Activated B cell treated with CpG ODN at 0.5 μM for 24 hours (primary cell): ENCODE measurements at regions of chr13 and their contacts with region 1.

Region 1: GRCh38 chr13:67238277-67238859 is 8.2 kb upstream of the PCDH9 start:
- DNase-seq: no peak
- ATAC-seq: peak; percentile 68
- H3K4me3 Mint-ChIP-seq: no peak overlapping the region
- H3K27ac Mint-ChIP-seq: no peak overlapping the region
- H3K4me1 Mint-ChIP-seq: no peaks in the 10 kb centered on the region
- H3K27me3 Mint-ChIP-seq: no peaks in the 10 kb centered on the region
- CTCF ChIP-seq: peak; percentile 82

Region 2: DNA sequence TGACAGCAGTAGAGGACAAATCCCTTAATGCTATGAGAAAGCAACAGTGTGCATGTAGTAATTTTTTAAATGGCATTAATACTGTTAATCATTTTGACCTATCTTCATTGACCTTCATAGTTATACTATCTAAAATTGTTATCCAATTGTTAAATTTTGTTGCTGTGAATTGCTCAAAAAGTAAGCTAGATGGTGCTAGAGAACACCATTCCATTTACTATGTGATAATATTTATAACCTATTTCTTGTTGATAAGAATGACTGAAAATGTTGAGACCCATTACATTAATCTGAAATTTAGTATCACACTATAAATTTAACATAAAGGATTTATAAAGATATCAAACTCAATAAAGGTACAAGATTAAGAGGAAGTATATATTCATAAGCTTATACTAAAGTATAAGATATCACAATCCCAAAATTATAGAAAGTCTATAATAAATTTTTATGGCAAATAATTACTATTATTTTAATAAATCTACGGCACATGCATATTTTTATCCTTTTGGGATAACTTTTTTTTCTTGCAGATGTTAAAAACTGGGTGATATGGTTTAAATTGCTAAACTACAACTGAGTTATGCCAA is 1581.5 kb before region 1 on chr13:
- CTCF ChIA-PET with region 1: no interaction called
- POLR2A ChIA-PET with region 1: no interaction called
- intact Hi-C with region 1: loop called (anchors 1 kb)
- DNase-seq: no peak
- ATAC-seq: no peak
- H3K4me3 Mint-ChIP-seq: no peak overlapping the region
- H3K27ac Mint-ChIP-seq: no peak overlapping the region
- H3K4me1 Mint-ChIP-seq: no peaks in the 10 kb centered on the region
- H3K27me3 Mint-ChIP-seq: no peaks in the 10 kb centered on the region
- CTCF ChIP-seq: no peak

Region 3: GRCh38 chr13:65926750-65927171 is 1311.6 kb before region 1 on chr13:
- CTCF ChIA-PET with region 1: interaction called, 4 read pairs
- POLR2A ChIA-PET with region 1: no interaction called
- intact Hi-C with region 1: loop called (anchors 5 kb)
- DNase-seq: no peak
- ATAC-seq: no peak
- H3K4me3 Mint-ChIP-seq: no peak overlapping the region
- H3K27ac Mint-ChIP-seq: no peak overlapping the region
- H3K4me1 Mint-ChIP-seq: no peaks in the 10 kb centered on the region
- H3K27me3 Mint-ChIP-seq: no peaks in the 10 kb centered on the region
- CTCF ChIP-seq: no peak

Region 4: DNA sequence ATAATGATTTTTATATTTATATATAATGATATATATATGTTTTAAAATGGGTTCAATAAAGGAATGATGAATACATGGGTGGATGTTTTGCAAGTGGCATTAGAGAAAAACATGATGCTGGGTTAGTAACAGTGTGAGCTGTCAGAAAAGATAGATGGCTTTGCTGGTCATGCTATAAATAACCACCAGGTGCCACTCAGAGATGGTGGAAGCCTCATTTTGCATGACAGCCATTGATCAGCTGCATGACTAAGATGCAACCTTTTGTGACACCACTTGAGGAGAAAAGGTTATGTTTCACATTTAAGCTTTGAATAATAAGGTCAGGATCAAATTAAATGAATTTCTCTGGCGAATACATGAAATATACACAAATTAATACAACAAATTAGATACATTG is 745.9 kb before region 1 on chr13:
- CTCF ChIA-PET with region 1: no interaction called
- POLR2A ChIA-PET with region 1: no interaction called
- intact Hi-C with region 1: loop called (anchors 5 kb)
- DNase-seq: no peak
- ATAC-seq: peak; percentile 56
- H3K4me3 Mint-ChIP-seq: no peak overlapping the region
- H3K27ac Mint-ChIP-seq: no peak overlapping the region
- H3K4me1 Mint-ChIP-seq: peaks cover 3% of the 10 kb centered on the region
- H3K27me3 Mint-ChIP-seq: no peaks in the 10 kb centered on the region
- CTCF ChIP-seq: no peak

Region 5: DNA sequence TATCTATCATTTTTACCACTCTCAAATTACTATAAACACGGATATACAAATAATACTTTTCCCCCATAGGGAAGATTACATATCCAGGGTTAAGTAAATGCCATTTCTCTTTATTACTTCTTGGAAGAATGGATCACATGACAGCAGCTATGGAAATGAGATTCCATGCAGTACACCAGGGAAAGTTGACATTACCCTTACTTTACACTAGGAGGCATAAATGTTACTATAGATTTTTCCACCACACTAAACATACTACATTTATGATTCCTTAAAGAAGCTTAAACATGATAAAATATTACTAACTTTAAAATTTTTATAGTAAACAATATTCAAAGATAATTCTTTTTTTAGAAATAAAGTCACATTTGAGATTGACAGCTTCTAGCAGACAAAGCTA is 619.7 kb before region 1 on chr13:
- CTCF ChIA-PET with region 1: interaction called, 5 read pairs
- POLR2A ChIA-PET with region 1: no interaction called
- intact Hi-C with region 1: loop called (anchors 5 kb)
- DNase-seq: no peak
- ATAC-seq: peak; percentile 56
- H3K4me3 Mint-ChIP-seq: no peak overlapping the region
- H3K27ac Mint-ChIP-seq: no peak overlapping the region
- H3K4me1 Mint-ChIP-seq: no peaks in the 10 kb centered on the region
- H3K27me3 Mint-ChIP-seq: no peaks in the 10 kb centered on the region
- CTCF ChIP-seq: no peak